ENCODE measurements at regions of chr5 and their contacts with region 1.

Region 1: GRCh38 chr5:153959134-153959957 is 79.4 kb downstream of the FAM114A2 start:
- DNase-seq: no peak
- ATAC-seq: no peak
- H3K4me3 ChIP-seq: no peak overlapping the region
- H3K27ac ChIP-seq: no peak overlapping the region
- H3K4me1 ChIP-seq: no peaks in the 10 kb centered on the region
- H3K27me3 ChIP-seq: no peaks in the 10 kb centered on the region
- CTCF ChIP-seq: no peak
- POLR2A ChIP-seq: no peak

Region 2: GRCh38 chr5:153496835-153497234 is 462.5 kb before region 1 on chr5:
- intact Hi-C with region 1: loop called (anchors 10 kb)
- DNase-seq: no peak
- ATAC-seq: no peak
- H3K4me3 ChIP-seq: no peak overlapping the region
- H3K27ac ChIP-seq: no peak overlapping the region
- H3K4me1 ChIP-seq: no peaks in the 10 kb centered on the region
- H3K27me3 ChIP-seq: no peaks in the 10 kb centered on the region
- CTCF ChIP-seq: peak in 6 of 7 experiments; percentile 18 to 42 (median 37)
- POLR2A ChIP-seq: no peak

Region 3: DNA sequence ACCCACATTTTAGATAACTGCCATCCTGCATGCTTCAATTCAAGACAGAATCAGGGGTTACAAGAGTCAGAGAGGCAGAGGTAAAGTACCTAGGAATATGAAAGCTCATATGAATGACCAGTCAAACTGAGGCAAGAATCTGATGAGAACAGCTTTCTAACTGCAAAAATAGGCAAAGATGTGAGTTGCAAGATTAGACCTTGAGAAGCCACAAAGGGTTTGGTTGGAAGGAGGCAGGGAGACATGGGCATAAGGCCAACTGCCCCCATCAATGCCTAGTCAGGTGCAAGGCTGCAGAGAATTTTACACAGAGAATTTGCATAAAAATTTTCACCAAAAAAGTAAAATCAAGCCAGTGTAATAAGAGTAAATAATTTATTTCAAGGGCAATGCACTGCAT is 66.6 kb after region 1 on chr5:
- intact Hi-C with region 1: no loop called
- DNase-seq: no peak
- ATAC-seq: no peak
- H3K4me3 ChIP-seq: no peak overlapping the region
- H3K27ac ChIP-seq: no peak overlapping the region
- H3K4me1 ChIP-seq: no peaks in the 10 kb centered on the region
- H3K27me3 ChIP-seq: no peaks in the 10 kb centered on the region
- CTCF ChIP-seq: no peak
- POLR2A ChIP-seq: no peak

Region 4: GRCh38 chr5:154097031-154097430 is 137.7 kb after region 1 on chr5:
- intact Hi-C with region 1: no loop called
- DNase-seq: no peak
- ATAC-seq: no peak
- H3K4me3 ChIP-seq: no peak overlapping the region
- H3K27ac ChIP-seq: no peak overlapping the region
- H3K4me1 ChIP-seq: peaks cover 7% of the 10 kb centered on the region
- H3K27me3 ChIP-seq: no peaks in the 10 kb centered on the region
- CTCF ChIP-seq: no peak
- POLR2A ChIP-seq: no peak

Measured in body of pancreas (tissue), 4 donors.